Calu3 (cell line): ENCODE measurements at regions of chr11 and their contacts with region 1.

Region 1: DNA sequence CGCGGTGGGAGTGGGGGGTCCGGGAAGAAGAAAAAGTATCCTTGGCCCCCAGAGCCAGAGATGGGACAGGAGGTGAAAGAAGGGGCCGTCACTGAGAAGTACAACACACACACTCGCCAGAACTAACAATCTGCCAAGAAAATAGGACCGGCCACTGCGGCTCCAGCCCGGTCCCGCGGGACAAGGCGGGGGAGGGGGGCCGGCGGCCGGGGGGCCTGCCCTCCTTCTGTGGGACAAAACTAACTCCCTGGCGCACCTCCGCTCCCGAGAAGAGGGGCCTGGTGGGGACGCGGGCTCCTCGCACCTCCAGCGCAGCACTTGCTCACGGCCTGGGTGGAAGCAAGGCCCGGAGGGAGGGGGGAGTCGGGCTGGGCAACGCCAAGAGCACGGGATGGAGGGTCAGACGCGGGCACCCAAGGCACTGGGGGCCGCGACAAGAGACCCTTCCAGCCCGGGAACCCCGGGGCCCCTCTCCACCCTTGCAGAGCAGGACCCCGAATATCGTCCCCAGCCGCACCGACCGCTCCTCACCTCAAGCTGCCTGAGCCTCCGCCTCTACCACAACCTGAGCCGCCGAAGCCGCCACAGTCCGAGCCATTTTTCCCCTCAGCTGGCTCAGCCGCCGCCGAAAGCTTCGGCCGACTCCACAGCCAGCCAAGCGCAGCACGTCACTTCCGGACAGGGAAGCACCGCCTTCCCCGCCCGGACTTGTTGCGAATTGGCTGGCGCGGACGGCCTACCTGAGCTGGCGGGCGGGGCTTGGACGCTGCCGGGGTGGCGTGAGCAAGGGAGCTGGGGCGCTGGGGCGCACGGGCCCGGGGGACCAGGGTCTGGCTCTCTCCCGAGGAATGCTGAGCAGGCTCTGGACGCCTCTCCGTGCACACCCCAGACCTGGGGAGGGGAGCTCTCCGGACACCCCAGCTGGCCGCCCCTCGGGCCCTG is at the start of gene PIK3C2A:
- DNase-seq: peak; percentile 98
- H3K4me3 Mint-ChIP-seq: peak within 1 kb of the TSS; percentile 92
- H3K27ac Mint-ChIP-seq: peak within 1 kb of the TSS; percentile 79
- H3K4me1 Mint-ChIP-seq: peaks cover 17% of the 10 kb centered on the region
- H3K27me3 Mint-ChIP-seq: no peaks in the 10 kb centered on the region
- CTCF ChIP-seq: no peak
- total RNA-seq, gene PIK3C2A: 70.2 and 75.9 TPM in 2 replicates

Region 2: GRCh38 chr11:17116121-17116520 is 91.5 kb before region 1 on chr11:
- CTCF ChIA-PET with region 1: no interaction called
- intact Hi-C with region 1: loop called (anchors 10 kb)
- DNase-seq: no peak
- H3K4me3 Mint-ChIP-seq: no peak overlapping the region
- H3K27ac Mint-ChIP-seq: no peak overlapping the region
- H3K4me1 Mint-ChIP-seq: no peaks in the 10 kb centered on the region
- H3K27me3 Mint-ChIP-seq: no peaks in the 10 kb centered on the region
- CTCF ChIP-seq: no peak

Region 3: GRCh38 chr11:17164361-17165246 is 43.0 kb before region 1 on chr11:
- CTCF ChIA-PET with region 1: no interaction called
- intact Hi-C with region 1: loop called (anchors 5 kb)
- DNase-seq: peak; percentile 45
- H3K4me3 Mint-ChIP-seq: peak overlapping the region; percentile 51
- H3K27ac Mint-ChIP-seq: peak overlapping the region; percentile 72
- H3K4me1 Mint-ChIP-seq: peaks cover 77% of the 10 kb centered on the region
- H3K27me3 Mint-ChIP-seq: no peaks in the 10 kb centered on the region
- CTCF ChIP-seq: no peak

Region 4: GRCh38 chr11:17221968-17222367 is 14.4 kb after region 1 on chr11:
- CTCF ChIA-PET with region 1: interaction called, 17 read pairs
- intact Hi-C with region 1: no loop called
- DNase-seq: no peak
- H3K4me3 Mint-ChIP-seq: no peak overlapping the region
- H3K27ac Mint-ChIP-seq: no peak overlapping the region
- H3K4me1 Mint-ChIP-seq: peaks cover 21% of the 10 kb centered on the region
- H3K27me3 Mint-ChIP-seq: no peaks in the 10 kb centered on the region
- CTCF ChIP-seq: no peak